GM12878 (cell line): ENCODE measurements at regions of chr12 and their contacts with region 1.

Region 1: GRCh38 chr12:63802012-63802608 is 22.4 kb downstream of the RXYLT1 start:
- DNase-seq: no peak
- ATAC-seq: peak; percentile 48
- H3K4me3 ChIP-seq: no peak overlapping the region
- H3K27ac ChIP-seq: no peak overlapping the region
- H3K4me1 ChIP-seq: no peaks in the 10 kb centered on the region
- H3K27me3 ChIP-seq: no peaks in the 10 kb centered on the region
- CTCF ChIP-seq: peak; percentile 37 to 65 (median 48); a peak in 5 of 6 replicates
- EP300 ChIP-seq: no peak
- POLR2A ChIP-seq: no peak
- RAD21 ChIP-seq: peak; percentile 69

Region 2: GRCh38 chr12:63420206-63420644 is 381.9 kb before region 1 on chr12:
- CTCF ChIA-PET with region 1: interaction called, 31 read pairs
- POLR2A ChIA-PET with region 1: no interaction called
- RAD21 ChIA-PET with region 1: no interaction called
- SMC1A ChIA-PET with region 1: interaction called, 6 read pairs
- in situ Hi-C with region 1: loop called (anchors 5 kb)
- intact Hi-C with region 1: loop called (anchors 2 kb)
- DNase-seq: peak; percentile 24
- ATAC-seq: peak; percentile 99
- H3K4me3 ChIP-seq: no peak overlapping the region
- H3K27ac ChIP-seq: no peak overlapping the region
- H3K4me1 ChIP-seq: no peaks in the 10 kb centered on the region
- H3K27me3 ChIP-seq: no peaks in the 10 kb centered on the region
- CTCF ChIP-seq: peak; percentile 57 to 75 (median 59); a peak in 5 of 6 replicates
- EP300 ChIP-seq: no peak
- POLR2A ChIP-seq: no peak
- RAD21 ChIP-seq: peak; percentile 66

Region 3: GRCh38 chr12:63668028-63668799 is 133.9 kb before region 1 on chr12 and contains the start of gene DPY19L2:
- CTCF ChIA-PET with region 1: interaction called, 4 read pairs
- POLR2A ChIA-PET with region 1: no interaction called
- RAD21 ChIA-PET with region 1: no interaction called
- SMC1A ChIA-PET with region 1: interaction called, 5 read pairs
- in situ Hi-C with region 1: loop called (anchors 5 kb)
- intact Hi-C with region 1: loop called (anchors 2 kb)
- DNase-seq: no peak
- ATAC-seq: peak; percentile 89
- H3K4me3 ChIP-seq: peak within 1 kb of the TSS; percentile 55; the same call in 1 of the 2 replicates
- H3K27ac ChIP-seq: no peak within 1 kb of the TSS
- H3K4me1 ChIP-seq: no peaks in the 10 kb centered on the region
- H3K27me3 ChIP-seq: peaks cover 0 to 5% of the 10 kb centered on the region in 2 experiments; a peak in 2 of 4 replicates
- CTCF ChIP-seq: no peak
- EP300 ChIP-seq: no peak
- POLR2A ChIP-seq: no peak
- RAD21 ChIP-seq: no peak
- polyA plus RNA-seq, gene DPY19L2: not detected

Region 4: GRCh38 chr12:63814146-63814772 is 12.1 kb after region 1 on chr12:
- CTCF ChIA-PET with region 1: interaction called, 22 read pairs
- POLR2A ChIA-PET with region 1: no interaction called
- RAD21 ChIA-PET with region 1: interaction called, 5 read pairs
- SMC1A ChIA-PET with region 1: interaction called, 7 read pairs
- in situ Hi-C with region 1: no loop called
- intact Hi-C with region 1: no loop called
- DNase-seq: no peak
- ATAC-seq: peak; percentile 58
- H3K4me3 ChIP-seq: peak overlapping the region; percentile 28; the same call in 1 of the 2 replicates
- H3K27ac ChIP-seq: peak overlapping the region; percentile 70
- H3K4me1 ChIP-seq: peaks cover 25% of the 10 kb centered on the region
- H3K27me3 ChIP-seq: no peaks in the 10 kb centered on the region
- CTCF ChIP-seq: no peak
- EP300 ChIP-seq: no peak
- POLR2A ChIP-seq: no peak
- RAD21 ChIP-seq: no peak

Region 5: GRCh38 chr12:63828867-63829266 is 26.8 kb after region 1 on chr12:
- CTCF ChIA-PET with region 1: no interaction called
- POLR2A ChIA-PET with region 1: no interaction called
- RAD21 ChIA-PET with region 1: no interaction called
- SMC1A ChIA-PET with region 1: no interaction called
- in situ Hi-C with region 1: no loop called
- intact Hi-C with region 1: no loop called
- DNase-seq: no peak
- ATAC-seq: no peak
- H3K4me3 ChIP-seq: no peak overlapping the region
- H3K27ac ChIP-seq: no peak overlapping the region
- H3K4me1 ChIP-seq: no peaks in the 10 kb centered on the region
- H3K27me3 ChIP-seq: no peaks in the 10 kb centered on the region
- CTCF ChIP-seq: no peak
- EP300 ChIP-seq: no peak
- POLR2A ChIP-seq: no peak
- RAD21 ChIP-seq: no peak

Region 6: GRCh38 chr12:64137117-64137516 is 335.0 kb after region 1 on chr12:
- CTCF ChIA-PET with region 1: no interaction called
- POLR2A ChIA-PET with region 1: no interaction called
- RAD21 ChIA-PET with region 1: no interaction called
- SMC1A ChIA-PET with region 1: no interaction called
- in situ Hi-C with region 1: no loop called
- intact Hi-C with region 1: no loop called
- DNase-seq: no peak
- ATAC-seq: no peak
- H3K4me3 ChIP-seq: no peak overlapping the region
- H3K27ac ChIP-seq: no peak overlapping the region
- H3K4me1 ChIP-seq: no peaks in the 10 kb centered on the region
- H3K27me3 ChIP-seq: no peaks in the 10 kb centered on the region
- CTCF ChIP-seq: no peak
- EP300 ChIP-seq: no peak
- POLR2A ChIP-seq: no peak
- RAD21 ChIP-seq: no peak